Activated naive CD4-positive, alpha-beta T cell treated with anti-CD3 and anti-CD28 coated beads for 36 hours (primary cell): ENCODE measurements at regions of chr3 and their contacts with region 1.

Region 1: DNA sequence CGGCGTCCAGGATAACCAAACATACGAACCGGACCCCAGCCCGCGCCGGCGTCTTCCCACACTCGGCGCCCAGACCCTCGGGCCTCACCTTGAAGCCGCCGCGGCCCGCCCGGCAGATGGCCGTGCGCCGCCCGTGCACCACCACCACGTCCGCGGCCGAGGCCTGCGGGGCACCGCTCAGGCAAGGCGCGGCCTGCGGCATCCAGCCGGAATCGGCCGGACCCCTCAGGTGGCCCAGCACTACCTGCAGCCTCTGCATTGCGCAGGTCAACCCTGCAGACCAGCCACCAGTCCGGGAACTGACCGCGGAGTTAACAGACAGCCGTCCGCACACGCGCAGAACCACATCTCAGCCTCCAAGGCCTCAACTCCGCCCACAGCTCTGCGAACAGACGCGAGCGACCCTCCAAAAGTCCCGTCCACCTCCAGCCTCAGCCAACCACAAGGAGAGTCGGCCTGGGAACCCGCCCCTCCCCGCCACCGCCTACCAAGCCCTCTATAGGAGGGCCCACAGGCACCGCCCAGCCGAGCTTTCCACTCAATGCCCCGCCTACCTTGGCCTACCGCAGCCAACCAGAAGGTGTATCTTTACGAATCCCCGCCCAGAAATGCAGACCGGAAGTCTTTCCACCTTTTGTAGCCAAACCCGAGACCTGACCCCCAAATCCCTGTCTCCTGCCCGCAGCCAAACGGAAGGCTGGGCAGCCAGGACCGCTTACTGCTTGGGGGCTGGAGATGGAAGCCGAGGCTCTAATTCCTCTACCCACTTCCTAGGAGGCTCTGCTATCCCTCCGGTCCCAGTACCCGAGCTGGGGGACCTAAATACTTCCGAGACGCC is at the start of gene ACAA1:
- DNase-seq: peak; percentile 99
- H3K4me3 Mint-ChIP-seq: peak within 1 kb of the TSS; percentile 88
- H3K27ac Mint-ChIP-seq: peak within 1 kb of the TSS; percentile 99
- H3K4me1 Mint-ChIP-seq: peaks cover 53% of the 10 kb centered on the region
- H3K27me3 Mint-ChIP-seq: no peaks in the 10 kb centered on the region
- total RNA-seq, gene ACAA1: 57.5 to 58.7 TPM

Region 2: GRCh38 chr3:36993326-36994283 is 1143.4 kb before region 1 on chr3 and contains the start of gene MLH1:
- CTCF ChIA-PET with region 1: no interaction called
- intact Hi-C with region 1: loop called (anchors 1 kb)
- DNase-seq: peak; percentile 100
- H3K4me3 Mint-ChIP-seq: no peak within 1 kb of the TSS
- H3K27ac Mint-ChIP-seq: no peak within 1 kb of the TSS
- H3K4me1 Mint-ChIP-seq: peaks cover 45% of the 10 kb centered on the region
- H3K27me3 Mint-ChIP-seq: no peaks in the 10 kb centered on the region
- total RNA-seq, gene MLH1: 86.6 to 95.3 TPM

Region 3: DNA sequence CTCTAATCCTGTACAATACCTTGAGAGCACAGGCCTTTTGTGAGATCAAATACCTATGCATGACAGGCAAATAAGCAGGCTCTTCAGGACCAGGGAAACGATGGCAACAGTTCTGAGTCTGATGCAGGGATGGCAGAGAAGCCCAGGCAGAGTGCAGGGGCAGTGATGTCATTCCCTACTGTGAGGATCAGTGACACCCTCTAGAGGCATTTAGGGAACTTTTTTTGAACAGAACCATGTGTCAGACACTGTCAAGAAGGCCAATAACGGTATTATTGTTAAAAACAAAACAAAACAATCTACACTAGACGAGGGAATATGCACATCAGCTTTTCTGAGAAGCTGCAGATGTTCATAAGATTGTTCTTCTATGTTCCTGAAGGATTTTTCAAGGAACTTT is 590.1 kb before region 1 on chr3:
- CTCF ChIA-PET with region 1: no interaction called
- intact Hi-C with region 1: no loop called
- DNase-seq: no peak
- H3K4me3 Mint-ChIP-seq: no peak overlapping the region
- H3K27ac Mint-ChIP-seq: no peak overlapping the region
- H3K4me1 Mint-ChIP-seq: no peaks in the 10 kb centered on the region
- H3K27me3 Mint-ChIP-seq: no peaks in the 10 kb centered on the region

Region 4: DNA sequence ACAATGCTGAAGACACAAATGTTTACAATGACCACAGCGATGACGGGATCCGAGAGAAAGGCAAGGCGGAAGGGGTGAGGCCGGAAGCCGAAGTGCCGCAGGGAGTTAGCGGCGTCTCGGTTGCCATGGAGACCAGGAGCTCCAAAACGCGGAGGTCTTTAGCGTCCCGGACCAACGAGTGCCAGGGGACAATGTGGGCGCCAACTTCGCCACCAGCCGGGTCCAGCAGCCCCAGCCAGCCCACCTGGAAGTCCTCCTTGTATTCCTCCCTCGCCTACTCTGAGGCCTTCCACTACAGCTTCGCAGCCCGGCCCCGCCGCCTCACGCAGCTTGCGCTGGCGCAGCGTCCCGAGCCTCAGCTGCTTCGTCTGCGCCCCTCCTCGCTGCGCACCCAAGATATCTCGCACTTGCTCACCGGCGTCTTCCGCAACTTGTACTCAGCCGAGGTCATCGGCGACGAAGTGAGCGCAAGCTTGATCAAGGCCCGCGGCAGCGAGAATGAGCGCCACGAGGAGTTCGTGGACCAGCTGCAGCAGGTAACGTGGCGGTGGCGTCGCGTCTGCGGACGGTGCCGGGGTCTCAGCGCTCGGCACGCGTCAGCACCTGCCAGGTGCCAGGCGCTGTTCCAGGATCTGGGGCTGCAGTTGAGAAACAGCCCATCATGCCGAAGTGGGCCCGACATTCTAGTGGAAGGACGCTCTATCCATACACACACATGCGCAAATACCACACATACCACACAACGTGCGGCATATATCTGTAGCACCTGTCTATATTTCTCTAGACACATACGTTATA is 97.7 kb before region 1 on chr3 and contains the start of gene DLEC1:
- CTCF ChIA-PET with region 1: no interaction called
- intact Hi-C with region 1: loop called (anchors 1 kb)
- DNase-seq: peak; percentile 88
- H3K4me3 Mint-ChIP-seq: peak within 1 kb of the TSS; percentile 66
- H3K27ac Mint-ChIP-seq: peak within 1 kb of the TSS; percentile 88
- H3K4me1 Mint-ChIP-seq: peaks cover 28% of the 10 kb centered on the region
- H3K27me3 Mint-ChIP-seq: peaks cover 4% of the 10 kb centered on the region
- total RNA-seq, gene DLEC1: 0.17 to 0.19 TPM

Region 5: DNA sequence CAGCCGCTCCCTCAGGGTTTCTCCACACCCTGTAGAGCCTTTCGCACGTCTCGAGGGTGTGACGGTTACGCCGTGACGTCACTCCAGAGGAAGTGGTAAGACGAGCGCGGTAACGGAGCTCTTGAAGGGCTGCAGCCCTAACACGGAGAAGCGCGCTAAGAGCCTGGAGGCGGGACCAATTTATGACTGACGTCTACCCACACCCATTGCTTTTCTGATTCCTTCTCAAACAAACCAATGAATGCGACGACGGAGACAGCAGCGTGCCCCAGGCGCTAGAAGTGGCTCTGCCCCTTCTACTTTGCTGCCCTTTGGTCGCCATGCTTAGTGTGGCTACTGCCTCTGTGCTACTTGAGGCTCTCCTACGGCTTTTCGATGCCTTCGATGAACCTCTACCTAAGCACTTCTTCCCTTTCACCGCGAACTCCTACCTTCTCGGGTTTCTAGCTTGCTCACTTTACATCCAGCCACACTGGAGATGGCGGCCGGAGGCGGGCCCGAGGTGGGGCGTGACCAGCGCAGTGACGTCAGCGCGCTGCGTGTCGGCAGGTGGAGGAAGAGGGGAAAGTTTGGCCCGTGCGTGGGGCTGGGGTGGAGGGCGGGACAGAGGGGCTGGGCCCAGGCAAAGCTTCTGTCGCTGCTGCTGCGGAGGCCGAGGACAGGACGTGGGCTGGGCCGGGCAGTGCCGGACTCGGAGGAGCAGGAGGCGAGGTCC is 28.1 kb after region 1 on chr3 and contains the start of gene OXSR1:
- CTCF ChIA-PET with region 1: interaction called, 11 read pairs
- intact Hi-C with region 1: loop called (anchors 1 kb)
- DNase-seq: peak; percentile 99
- H3K4me3 Mint-ChIP-seq: peak within 1 kb of the TSS; percentile 93
- H3K27ac Mint-ChIP-seq: peak within 1 kb of the TSS; percentile 99
- H3K4me1 Mint-ChIP-seq: peaks cover 41% of the 10 kb centered on the region
- H3K27me3 Mint-ChIP-seq: no peaks in the 10 kb centered on the region
- total RNA-seq, gene OXSR1: 33.8 to 35.0 TPM

Region 6: DNA sequence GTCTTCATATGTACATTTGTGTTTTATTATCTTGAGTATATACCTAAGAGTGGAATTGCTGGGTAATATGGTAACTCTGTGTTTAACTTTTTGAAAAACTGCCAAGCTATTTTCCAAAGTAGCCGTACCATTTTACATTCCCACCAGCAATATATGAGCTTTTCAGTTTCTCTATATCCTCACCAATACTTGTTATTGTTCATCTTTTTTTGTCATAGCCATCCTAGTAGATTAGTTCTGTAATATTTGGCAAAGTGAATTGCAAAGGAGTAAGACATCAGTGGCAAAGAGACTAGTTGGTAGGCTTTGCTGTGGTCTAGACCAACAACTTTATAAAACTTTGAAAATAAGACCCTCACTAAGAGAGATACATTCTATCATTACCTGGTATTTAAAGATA is 49.8 kb after region 1 on chr3:
- CTCF ChIA-PET with region 1: no interaction called
- intact Hi-C with region 1: no loop called
- DNase-seq: no peak
- H3K4me3 Mint-ChIP-seq: no peak overlapping the region
- H3K27ac Mint-ChIP-seq: no peak overlapping the region
- H3K4me1 Mint-ChIP-seq: peaks cover 4% of the 10 kb centered on the region
- H3K27me3 Mint-ChIP-seq: no peaks in the 10 kb centered on the region

Region 7: GRCh38 chr3:38346587-38347410 is 209.8 kb after region 1 on chr3 and contains the start of gene XYLB:
- CTCF ChIA-PET with region 1: interaction called, 5 read pairs
- intact Hi-C with region 1: loop called (anchors 1 kb)
- DNase-seq: peak; percentile 79
- H3K4me3 Mint-ChIP-seq: peak within 1 kb of the TSS; percentile 72
- H3K27ac Mint-ChIP-seq: no peak within 1 kb of the TSS
- H3K4me1 Mint-ChIP-seq: peaks cover 4% of the 10 kb centered on the region
- H3K27me3 Mint-ChIP-seq: peaks cover 2% of the 10 kb centered on the region
- total RNA-seq, gene XYLB: 2.5 to 2.8 TPM

Region 8: DNA sequence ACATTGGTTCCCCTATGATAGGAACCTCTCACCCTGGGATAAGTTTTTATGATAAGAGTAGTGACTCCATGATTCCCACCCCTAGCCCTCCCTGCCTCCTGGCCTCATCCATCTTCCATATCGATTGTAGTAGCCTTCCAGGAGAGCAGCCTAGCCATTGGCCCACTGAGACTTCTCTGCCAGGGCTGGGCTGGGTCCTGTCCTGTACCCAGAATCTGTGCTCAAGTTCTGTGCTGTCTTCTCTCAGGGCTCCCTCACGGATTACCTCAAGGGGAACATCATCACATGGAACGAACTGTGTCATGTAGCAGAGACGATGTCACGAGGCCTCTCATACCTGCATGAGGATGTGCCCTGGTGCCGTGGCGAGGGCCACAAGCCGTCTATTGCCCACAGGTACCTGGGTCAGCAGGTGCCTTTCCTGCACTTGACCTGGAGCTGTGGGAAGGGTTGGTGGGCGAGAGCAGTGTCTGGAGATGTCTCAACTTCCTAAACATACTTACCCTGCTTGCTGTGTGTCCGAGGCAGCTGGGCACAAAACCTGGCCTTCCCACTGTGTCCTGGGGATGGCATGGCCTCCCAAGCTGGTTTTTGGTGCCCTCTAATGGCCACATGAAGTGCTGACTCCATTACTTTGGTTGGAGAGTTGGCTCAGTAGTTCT is 342.6 kb after region 1 on chr3:
- CTCF ChIA-PET with region 1: interaction called, 4 read pairs
- intact Hi-C with region 1: loop called (anchors 5 kb)
- DNase-seq: peak; percentile 63
- H3K4me3 Mint-ChIP-seq: no peak overlapping the region
- H3K27ac Mint-ChIP-seq: no peak overlapping the region
- H3K4me1 Mint-ChIP-seq: no peaks in the 10 kb centered on the region
- H3K27me3 Mint-ChIP-seq: no peaks in the 10 kb centered on the region

Region 9: GRCh38 chr3:38651154-38651789 is 514.3 kb after region 1 on chr3:
- CTCF ChIA-PET with region 1: no interaction called
- intact Hi-C with region 1: loop called (anchors 2 kb)
- DNase-seq: peak; percentile 81
- H3K4me3 Mint-ChIP-seq: peak overlapping the region; percentile 27
- H3K27ac Mint-ChIP-seq: no peak overlapping the region
- H3K4me1 Mint-ChIP-seq: peaks cover 10% of the 10 kb centered on the region
- H3K27me3 Mint-ChIP-seq: peaks cover 14% of the 10 kb centered on the region